ENCODE measurements at regions of chr7 and their contacts with region 1.

Region 1: DNA sequence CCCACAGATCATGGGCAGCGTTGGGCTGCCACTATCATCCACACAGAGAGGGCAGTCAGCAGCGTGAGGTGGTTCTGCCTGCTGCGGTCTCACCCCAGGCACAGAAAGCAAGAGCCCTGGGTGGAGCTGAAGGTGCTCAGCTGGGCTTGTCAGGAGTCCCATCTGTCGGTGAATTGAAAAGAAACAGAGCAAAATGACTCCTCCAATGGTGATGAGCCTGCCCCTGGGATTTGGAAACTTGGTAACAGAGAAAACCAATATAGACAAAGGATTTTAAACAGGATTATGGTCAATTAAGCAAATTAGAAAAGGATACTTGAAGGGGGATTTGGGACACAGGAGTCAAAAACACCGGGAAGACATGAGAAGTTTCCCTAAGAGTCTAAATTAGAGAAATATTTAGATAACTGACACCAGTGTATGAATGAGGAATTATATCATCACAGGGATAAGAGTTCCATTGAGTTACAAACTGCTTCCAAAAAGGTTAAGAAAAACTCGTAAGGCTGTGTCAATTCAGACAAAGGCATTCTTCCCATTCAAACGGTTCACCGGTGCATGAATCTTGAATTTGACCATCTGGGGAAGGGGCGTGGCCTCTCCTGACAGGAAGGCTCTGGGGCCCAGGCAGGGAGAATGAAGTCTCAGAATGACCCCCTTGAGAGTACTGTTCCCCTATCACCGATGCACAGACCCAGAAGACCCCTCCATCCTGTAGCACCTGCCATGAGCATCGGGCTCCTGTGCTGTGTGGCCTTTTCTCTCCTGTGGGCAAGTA is 70.0 kb upstream of the PRSS58 start:
- DNase-seq: no peak
- H3K4me3 ChIP-seq: no peak overlapping the region
- H3K27ac ChIP-seq: no peak overlapping the region
- H3K4me1 ChIP-seq: no peaks in the 10 kb centered on the region
- H3K27me3 ChIP-seq: no peaks in the 10 kb centered on the region
- CTCF ChIP-seq: no peak
- POLR2A ChIP-seq: no peak

Region 2: GRCh38 chr7:141427134-141427533 is 900.7 kb before region 1 on chr7:
- intact Hi-C with region 1: loop called (anchors 5 kb)
- DNase-seq: no peak
- H3K4me3 ChIP-seq: no peak overlapping the region
- H3K27ac ChIP-seq: no peak overlapping the region
- H3K4me1 ChIP-seq: no peaks in the 10 kb centered on the region
- H3K27me3 ChIP-seq: no peaks in the 10 kb centered on the region
- CTCF ChIP-seq: no peak
- POLR2A ChIP-seq: no peak

Measured in breast epithelium (tissue), 4 donors.